ENCODE measurements at regions of chr6 and their contacts with region 1.

Region 1: DNA sequence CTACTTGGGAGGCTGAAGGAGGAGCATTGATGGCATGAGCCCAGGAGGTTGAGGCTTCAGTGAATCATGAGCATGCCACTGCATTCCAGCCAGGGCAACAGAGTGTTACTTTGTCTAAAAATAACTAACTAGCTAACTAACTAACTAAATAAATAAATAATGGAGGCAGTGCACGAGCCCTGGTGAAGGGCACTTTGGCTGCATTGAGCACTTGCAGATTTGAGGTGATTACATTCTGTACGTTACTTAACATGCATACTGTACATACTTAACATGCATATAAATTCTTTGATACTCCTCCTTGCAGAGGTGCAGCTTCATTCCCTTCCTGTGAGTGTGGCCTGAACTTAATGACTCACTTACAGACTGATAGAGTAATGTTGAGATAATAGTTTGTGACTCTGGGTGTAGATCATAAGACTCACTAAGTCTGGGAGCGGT is 10.7 kb downstream of the HLA-A start:
- DNase-seq: no peak
- H3K4me3 ChIP-seq: no peak overlapping the region
- H3K4me3 Mint-ChIP-seq: no peak overlapping the region
- H3K27ac ChIP-seq: no peak overlapping the region
- H3K27ac Mint-ChIP-seq: peak overlapping the region in 1 of 7 donors; percentile 23
- H3K4me1 ChIP-seq: peaks cover 12% of the 10 kb centered on the region
- H3K4me1 Mint-ChIP-seq: peaks cover 19 to 37% (median 31%) of the 10 kb centered on the region in 4 donors
- H3K27me3 ChIP-seq: no peaks in the 10 kb centered on the region
- H3K27me3 Mint-ChIP-seq: no peaks in the 10 kb centered on the region

Region 2: GRCh38 chr6:29845405-29846006 is 107.5 kb before region 1 on chr6:
- CTCF ChIA-PET with region 1: no interaction called
- POLR2A ChIA-PET with region 1: no interaction called
- intact Hi-C with region 1: no loop called
- DNase-seq: peak in 1 of 5 donors; percentile 80
- H3K4me3 ChIP-seq: no peak overlapping the region
- H3K4me3 Mint-ChIP-seq: no peak overlapping the region
- H3K27ac ChIP-seq: no peak overlapping the region
- H3K27ac Mint-ChIP-seq: peak overlapping the region in 2 of 7 donors; percentile 39 to 40
- H3K4me1 ChIP-seq: no peaks in the 10 kb centered on the region
- H3K4me1 Mint-ChIP-seq: peaks cover 8 to 16% (median 11%) of the 10 kb centered on the region in 4 donors
- H3K27me3 ChIP-seq: peaks cover 22% of the 10 kb centered on the region
- H3K27me3 Mint-ChIP-seq: peaks cover 23 to 34% of the 10 kb centered on the region in 2 donors

Region 3: DNA sequence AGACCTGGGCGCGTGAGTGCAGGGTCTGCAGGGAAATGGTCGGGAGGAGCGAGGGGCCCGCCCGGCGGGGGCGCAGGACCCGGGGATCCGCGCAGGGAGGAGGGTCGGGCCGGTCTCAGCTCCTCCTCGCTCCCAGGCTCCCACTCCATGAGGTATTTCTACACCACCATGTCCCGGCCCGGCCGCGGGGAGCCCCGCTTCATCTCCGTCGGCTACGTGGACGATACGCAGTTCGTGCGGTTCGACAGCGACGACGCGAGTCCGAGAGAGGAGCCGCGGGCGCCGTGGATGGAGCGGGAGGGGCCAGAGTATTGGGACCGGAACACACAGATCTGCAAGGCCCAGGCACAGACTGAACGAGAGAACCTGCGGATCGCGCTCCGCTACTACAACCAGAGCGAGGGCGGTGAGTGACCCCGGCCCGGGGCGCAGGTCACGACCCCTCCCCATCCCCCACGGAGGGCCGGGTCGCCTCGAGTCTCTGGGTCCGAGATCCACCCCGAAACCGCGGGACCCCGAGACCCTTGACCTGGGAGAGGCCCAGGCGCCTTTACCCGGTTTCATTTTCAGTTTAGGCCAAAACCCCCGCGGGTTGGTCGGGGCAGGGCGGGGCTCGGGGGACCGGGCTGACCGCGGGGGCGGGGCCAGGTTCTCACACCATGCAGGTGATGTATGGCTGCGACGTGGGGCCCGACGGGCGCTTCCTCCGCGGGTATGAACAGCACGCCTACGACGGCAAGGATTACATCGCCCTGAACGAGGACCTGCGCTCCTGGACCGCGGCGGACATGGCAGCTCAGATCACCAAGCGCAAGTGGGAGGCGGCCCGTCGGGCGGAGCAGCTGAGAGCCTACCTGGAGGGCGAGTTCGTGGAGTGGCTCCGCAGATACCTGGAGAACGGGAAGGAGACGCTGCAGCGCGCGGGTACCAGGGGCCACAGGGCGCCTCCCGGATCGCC is 64.9 kb before region 1 on chr6:
- CTCF ChIA-PET with region 1: no interaction called
- POLR2A ChIA-PET with region 1: interaction called, 72 read pairs
- intact Hi-C with region 1: loop called (anchors 1 kb)
- DNase-seq: peak; percentile 69 to 96 (median 83)
- H3K4me3 ChIP-seq: peak overlapping the region; percentile 6 to 60
- H3K4me3 Mint-ChIP-seq: peak overlapping the region; percentile 41 to 96 (median 90)
- H3K27ac ChIP-seq: peak overlapping the region; percentile 91
- H3K27ac Mint-ChIP-seq: peak overlapping the region in 6 of 7 donors; percentile 92 to 99 (median 97)
- H3K4me1 ChIP-seq: peaks cover 15% of the 10 kb centered on the region
- H3K4me1 Mint-ChIP-seq: peaks cover 0 to 69% (median 14%) of the 10 kb centered on the region in 4 donors
- H3K27me3 ChIP-seq: no peaks in the 10 kb centered on the region
- H3K27me3 Mint-ChIP-seq: no peaks in the 10 kb centered on the region

Region 4: GRCh38 chr6:29907637-29908340 is 45.2 kb before region 1 on chr6:
- CTCF ChIA-PET with region 1: no interaction called
- POLR2A ChIA-PET with region 1: no interaction called
- intact Hi-C with region 1: no loop called
- DNase-seq: no peak
- H3K4me3 ChIP-seq: no peak overlapping the region
- H3K4me3 Mint-ChIP-seq: no peak overlapping the region
- H3K27ac ChIP-seq: no peak overlapping the region
- H3K27ac Mint-ChIP-seq: peak overlapping the region in 1 of 7 donors; percentile 33
- H3K4me1 ChIP-seq: no peaks in the 10 kb centered on the region
- H3K4me1 Mint-ChIP-seq: no peaks in the 10 kb centered on the region
- H3K27me3 ChIP-seq: no peaks in the 10 kb centered on the region
- H3K27me3 Mint-ChIP-seq: peaks cover 0 to 21% of the 10 kb centered on the region in 2 donors

Region 5: GRCh38 chr6:29989211-29989610 is 36.2 kb after region 1 on chr6:
- CTCF ChIA-PET with region 1: no interaction called
- POLR2A ChIA-PET with region 1: no interaction called
- intact Hi-C with region 1: no loop called
- DNase-seq: no peak
- H3K4me3 ChIP-seq: no peak overlapping the region
- H3K4me3 Mint-ChIP-seq: no peak overlapping the region
- H3K27ac ChIP-seq: no peak overlapping the region
- H3K27ac Mint-ChIP-seq: no peak overlapping the region
- H3K4me1 ChIP-seq: no peaks in the 10 kb centered on the region
- H3K4me1 Mint-ChIP-seq: no peaks in the 10 kb centered on the region
- H3K27me3 ChIP-seq: no peaks in the 10 kb centered on the region
- H3K27me3 Mint-ChIP-seq: peaks cover 3 to 7% of the 10 kb centered on the region in 2 donors

Region 6: DNA sequence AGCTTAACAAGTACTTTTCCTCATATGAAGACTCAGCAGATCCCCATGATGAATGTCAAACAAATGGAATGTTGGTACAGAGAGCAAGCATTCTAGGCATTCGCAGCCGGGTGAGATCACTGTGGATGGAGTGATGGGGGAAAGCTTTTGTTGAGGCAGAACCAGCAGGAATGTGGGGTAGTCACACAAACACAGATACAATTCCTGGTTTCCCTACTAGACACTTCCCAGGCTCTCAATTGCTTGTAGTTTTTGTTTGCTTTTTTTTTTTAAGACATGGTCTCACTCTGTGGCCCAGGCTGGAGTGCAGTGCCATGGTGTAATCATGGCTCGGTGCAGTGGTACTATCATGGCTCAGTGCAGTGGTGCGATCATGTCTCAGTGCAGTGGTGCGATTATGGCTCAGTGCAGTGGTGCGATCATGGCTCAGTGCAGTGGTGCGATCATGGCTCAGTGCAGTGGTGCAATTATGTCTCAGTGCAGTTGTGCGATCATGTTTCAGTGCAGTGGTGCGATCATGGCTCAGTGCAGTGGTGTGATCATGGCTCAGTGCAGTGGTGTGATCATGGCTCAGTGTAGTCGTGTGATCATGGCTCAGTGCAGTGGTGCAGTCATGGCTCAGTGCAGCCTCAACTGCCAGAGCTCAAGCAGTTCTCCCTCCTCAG is 806.7 kb after region 1 on chr6:
- CTCF ChIA-PET with region 1: no interaction called
- POLR2A ChIA-PET with region 1: no interaction called
- intact Hi-C with region 1: no loop called
- DNase-seq: no peak
- H3K4me3 ChIP-seq: no peak overlapping the region
- H3K4me3 Mint-ChIP-seq: no peak overlapping the region
- H3K27ac ChIP-seq: no peak overlapping the region
- H3K27ac Mint-ChIP-seq: peak overlapping the region in 1 of 7 donors; percentile 78
- H3K4me1 ChIP-seq: peaks cover 7% of the 10 kb centered on the region
- H3K4me1 Mint-ChIP-seq: peaks cover 8 to 22% (median 15%) of the 10 kb centered on the region in 4 donors
- H3K27me3 ChIP-seq: no peaks in the 10 kb centered on the region
- H3K27me3 Mint-ChIP-seq: no peaks in the 10 kb centered on the region